ENCODE measurements at regions of chr2 and their contacts with region 1.

Region 1: GRCh38 chr2:62467475-62468321 is 38.3 kb downstream of the TMEM17 start:
- DNase-seq: peak; percentile 78
- ATAC-seq: peak; percentile 88

Region 2: GRCh38 chr2:61485281-61485680 is 982.4 kb before region 1 on chr2:
- intact Hi-C with region 1: no loop called
- DNase-seq: no peak
- ATAC-seq: no peak

Region 3: DNA sequence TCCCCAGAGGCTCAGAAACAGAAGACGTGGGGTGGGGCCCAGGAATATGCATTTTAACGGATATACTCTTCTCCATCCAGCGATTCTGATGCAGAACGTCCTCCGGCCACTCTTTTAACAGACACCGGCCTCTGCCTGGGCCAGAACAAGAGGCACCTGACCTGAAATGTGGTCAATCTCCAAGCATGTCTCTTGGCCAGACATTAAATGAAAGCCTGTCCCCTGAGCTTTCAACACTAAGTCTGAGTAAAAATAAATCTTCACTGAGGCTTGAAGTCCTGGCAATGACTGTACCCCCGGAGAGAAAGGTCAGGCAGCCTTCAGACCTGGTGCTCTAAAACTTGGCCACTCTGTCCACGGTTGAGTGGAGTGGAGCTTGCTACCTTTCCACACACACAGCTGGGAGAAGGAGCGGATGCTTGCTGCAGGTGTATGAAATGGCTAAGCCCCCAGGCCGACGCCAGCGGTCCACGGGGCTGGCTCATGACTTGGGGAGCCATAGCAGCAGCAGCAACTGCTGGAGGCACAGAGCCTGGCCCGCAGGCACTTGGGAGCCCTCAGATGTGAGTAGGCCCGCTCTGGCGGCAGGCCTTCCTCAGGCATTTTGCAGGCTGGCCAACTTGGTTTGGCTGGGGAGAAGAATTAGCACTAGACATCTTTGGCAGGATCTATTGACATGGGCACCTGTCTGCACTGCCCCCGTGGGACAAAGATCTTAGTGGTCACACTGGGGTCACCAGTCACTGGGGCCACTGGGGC is 41.4 kb before region 1 on chr2:
- intact Hi-C with region 1: loop called (anchors 1 kb)
- DNase-seq: no peak
- ATAC-seq: no peak

Region 4: DNA sequence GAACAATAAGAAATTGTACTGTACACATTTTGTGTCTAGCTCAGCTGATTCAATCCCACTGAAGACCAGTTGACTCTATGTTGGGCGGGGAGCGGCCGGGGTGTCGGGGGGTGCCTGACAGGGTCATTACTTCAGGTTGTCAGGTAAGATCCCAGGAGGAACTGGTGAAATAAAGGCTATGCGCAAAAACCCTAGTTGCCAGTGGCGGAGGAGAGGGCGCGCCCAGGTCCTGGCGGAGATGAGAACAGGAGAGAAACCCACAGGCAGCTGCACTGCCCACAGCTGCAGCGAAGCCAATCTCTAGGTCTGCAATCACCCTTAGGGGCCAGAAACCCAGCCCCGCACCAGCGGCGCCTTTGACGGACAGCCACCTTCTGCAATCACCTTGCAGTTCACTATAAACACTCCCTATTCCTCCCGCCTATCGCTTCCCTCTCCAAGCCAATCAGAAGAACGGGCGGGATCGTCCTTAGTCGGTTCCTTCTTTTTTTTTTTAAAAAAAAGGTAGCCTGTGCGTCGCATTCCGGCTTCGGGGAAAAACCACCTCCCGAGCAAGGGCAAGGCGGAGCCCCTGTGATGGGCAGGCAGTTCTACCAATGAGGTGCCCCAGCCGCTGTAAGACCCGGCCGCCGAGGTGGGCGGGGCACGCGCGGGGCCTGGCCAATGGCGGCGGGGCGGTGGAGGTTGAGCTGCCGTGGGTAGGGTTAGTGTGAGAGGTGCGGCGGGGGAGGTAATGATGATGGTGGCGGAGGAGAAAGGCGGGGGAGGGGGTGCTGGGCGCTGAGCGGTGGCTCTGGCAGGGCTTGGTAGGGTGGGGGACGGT is 237.5 kb after region 1 on chr2 and contains the start of gene EHBP1:
- intact Hi-C with region 1: loop called (anchors 10 kb)
- DNase-seq: peak; percentile 99
- ATAC-seq: peak; percentile 98
- total RNA-seq, gene EHBP1: 310 TPM